HEK293T (cell line): ENCODE measurements at regions of chr21 and their contacts with region 1.

Region 1: GRCh38 chr21:26769613-26770188 is 75.5 kb downstream of the ADAMTS1 start:
- DNase-seq: peak; percentile 28

Region 2: GRCh38 chr21:26788790-26789189 is 19.1 kb after region 1 on chr21:
- CTCF ChIA-PET with region 1: interaction called, 15 read pairs
- POLR2A ChIA-PET with region 1: no interaction called
- DNase-seq: no peak